Breast epithelium (tissue), 4 donors: ENCODE measurements at regions of chr9 and their contacts with region 1.

Region 1: GRCh38 chr9:135144581-135145108 is 57.2 kb downstream of the OLFM1 start:
- DNase-seq: no peak
- H3K4me3 ChIP-seq: no peak overlapping the region
- H3K27ac ChIP-seq: no peak overlapping the region
- H3K4me1 ChIP-seq: no peaks in the 10 kb centered on the region
- H3K27me3 ChIP-seq: peaks cover 0 to 60% of the 10 kb centered on the region in 2 donors
- CTCF ChIP-seq: no peak
- POLR2A ChIP-seq: no peak

Region 2: GRCh38 chr9:135123773-135124134 is 20.9 kb before region 1 on chr9:
- intact Hi-C with region 1: no loop called
- DNase-seq: no peak
- H3K4me3 ChIP-seq: no peak overlapping the region
- H3K27ac ChIP-seq: no peak overlapping the region
- H3K4me1 ChIP-seq: no peaks in the 10 kb centered on the region
- H3K27me3 ChIP-seq: peaks cover 0 to 20% of the 10 kb centered on the region in 2 donors
- CTCF ChIP-seq: no peak
- POLR2A ChIP-seq: no peak

Region 3: DNA sequence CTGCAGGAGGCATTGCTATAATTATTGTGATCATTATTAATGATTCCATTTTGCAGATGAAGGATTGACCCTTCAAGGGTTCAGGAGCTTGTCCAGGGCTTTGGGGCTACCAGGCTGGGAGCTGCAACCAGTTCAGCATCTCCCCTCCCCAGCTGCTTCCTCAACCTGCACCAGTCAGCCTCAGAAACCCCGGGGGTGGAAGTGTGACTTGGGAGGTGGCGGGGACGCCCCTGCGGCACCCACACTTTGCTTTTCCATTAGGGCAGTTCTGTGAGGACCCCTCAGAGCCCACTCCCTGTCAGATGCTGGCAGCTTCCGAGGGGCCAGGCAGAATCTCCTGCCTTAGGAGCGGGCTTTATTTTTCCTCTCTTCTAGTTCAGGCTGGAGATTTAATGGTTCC is 28.4 kb after region 1 on chr9:
- intact Hi-C with region 1: loop called (anchors 1 kb)
- DNase-seq: no peak
- H3K4me3 ChIP-seq: no peak overlapping the region
- H3K27ac ChIP-seq: no peak overlapping the region
- H3K4me1 ChIP-seq: no peaks in the 10 kb centered on the region
- H3K27me3 ChIP-seq: peaks cover 0 to 44% of the 10 kb centered on the region in 2 donors
- CTCF ChIP-seq: no peak
- POLR2A ChIP-seq: no peak